ENCODE measurements at regions of chr3 and their contacts with region 1.

Region 1: GRCh38 chr3:156519758-156520162 is 35.2 kb downstream of the SSR3 start:
- DNase-seq: no peak
- ATAC-seq: no peak
- H3K4me3 ChIP-seq: no peak overlapping the region
- H3K4me3 Mint-ChIP-seq: no peak overlapping the region
- H3K27ac ChIP-seq: no peak overlapping the region
- H3K27ac Mint-ChIP-seq: no peak overlapping the region
- H3K4me1 ChIP-seq: peaks cover 2 to 6% of the 10 kb centered on the region in 2 donors
- H3K4me1 Mint-ChIP-seq: peaks cover 6 to 26% (median 9%) of the 10 kb centered on the region in 7 donors
- H3K27me3 ChIP-seq: no peaks in the 10 kb centered on the region
- H3K27me3 Mint-ChIP-seq: peaks cover 13 to 84% (median 33%) of the 10 kb centered on the region in 5 donors

Region 2: GRCh38 chr3:157081681-157082210 is 562.0 kb after region 1 on chr3:
- CTCF ChIA-PET with region 1: no interaction called
- POLR2A ChIA-PET with region 1: interaction called, 3 read pairs
- intact Hi-C with region 1: loop called in 1 of 2 experiments (anchors 10 kb)
- DNase-seq: peak; percentile 60 to 86 (median 70)
- ATAC-seq: peak; percentile 96
- H3K4me3 ChIP-seq: no peak overlapping the region
- H3K4me3 Mint-ChIP-seq: no peak overlapping the region
- H3K27ac ChIP-seq: no peak overlapping the region
- H3K27ac Mint-ChIP-seq: peak overlapping the region in 8 of 9 donors; percentile 9 to 79 (median 56)
- H3K4me1 ChIP-seq: peaks cover 0 to 12% of the 10 kb centered on the region in 2 donors
- H3K4me1 Mint-ChIP-seq: peaks cover 0 to 54% (median 6%) of the 10 kb centered on the region in 7 donors
- H3K27me3 ChIP-seq: no peaks in the 10 kb centered on the region
- H3K27me3 Mint-ChIP-seq: no peaks in the 10 kb centered on the region